ENCODE measurements at regions of chr2 and their contacts with region 1.

Region 1: DNA sequence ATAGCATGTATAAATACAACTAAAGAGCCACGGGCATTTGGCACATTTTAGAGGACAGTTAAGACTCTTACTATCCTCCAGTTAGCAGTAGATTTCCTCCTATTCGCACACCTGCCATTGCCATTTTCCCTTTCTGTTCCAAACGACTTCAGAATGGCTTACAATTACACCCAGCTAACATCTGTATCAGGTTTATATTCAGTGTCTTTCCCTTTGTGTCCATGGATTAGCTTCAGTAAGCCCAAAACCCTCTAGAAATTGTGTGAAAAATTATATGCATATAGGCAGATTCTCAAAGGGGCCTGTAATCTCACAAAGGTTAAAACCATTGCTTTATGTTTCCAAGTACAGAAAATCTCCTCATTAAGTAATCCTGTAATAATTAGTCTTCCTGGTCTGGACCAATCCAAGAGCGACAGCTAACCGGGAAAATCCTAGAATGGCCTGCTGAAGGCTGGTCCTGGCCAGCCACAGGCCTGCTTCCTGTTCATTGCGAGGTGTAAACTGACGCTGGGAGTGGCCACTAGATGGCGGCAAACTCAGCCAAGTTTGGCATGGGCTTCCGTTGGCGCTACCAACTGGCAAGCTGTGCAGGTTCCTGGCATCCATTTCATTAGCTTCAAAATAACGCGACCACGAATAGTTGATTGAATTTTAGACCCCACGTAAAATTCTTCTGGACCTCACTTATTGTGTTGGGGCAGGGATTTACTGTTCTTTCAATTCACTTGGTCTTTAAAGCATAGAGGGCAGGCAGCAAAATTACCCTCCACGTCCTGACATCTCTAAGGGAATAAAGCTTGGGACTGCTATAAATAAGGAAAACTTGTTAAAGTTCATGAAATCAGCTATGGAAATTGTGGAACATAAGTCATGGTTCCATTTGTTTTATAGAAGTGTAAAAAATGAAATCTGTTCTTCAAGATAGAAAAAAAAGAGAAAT is 17.1 kb downstream of the ARHGAP25 start:
- DNase-seq: peak; percentile 84 to 93 (median 91)
- H3K4me3 ChIP-seq: no peak overlapping the region
- H3K27ac ChIP-seq: no peak overlapping the region
- H3K4me1 ChIP-seq: peaks cover 6% of the 10 kb centered on the region
- H3K27me3 ChIP-seq: no peaks in the 10 kb centered on the region
- CTCF ChIP-seq: peak; percentile 85 to 91 (median 87)
- EP300 ChIP-seq: no peak
- POLR2A ChIP-seq: no peak

Region 2: GRCh38 chr2:68828887-68829708 is 77.4 kb after region 1 on chr2:
- intact Hi-C with region 1: loop called in 1 of 4 experiments (anchors 5 kb)
- DNase-seq: peak; percentile 96 to 99 (median 98)
- H3K4me3 ChIP-seq: no peak overlapping the region
- H3K27ac ChIP-seq: peak overlapping the region in 1 of 2 donors; percentile 16
- H3K4me1 ChIP-seq: peaks cover 14% of the 10 kb centered on the region
- H3K27me3 ChIP-seq: no peaks in the 10 kb centered on the region
- CTCF ChIP-seq: peak in 1 of 3 donors; percentile 18
- EP300 ChIP-seq: peak; percentile 39
- POLR2A ChIP-seq: no peak